Panc1 (cell line): ENCODE measurements at regions of chr15 and their contacts with region 1.

Region 1: GRCh38 chr15:96893159-96893906 is 562.8 kb downstream of the NR2F2 start:
- DNase-seq: no peak
- ATAC-seq: peak; percentile 88
- H3K4me3 ChIP-seq: no peak overlapping the region
- H3K27ac ChIP-seq: no peak overlapping the region
- H3K4me1 ChIP-seq: no peaks in the 10 kb centered on the region
- H3K27me3 ChIP-seq: no peaks in the 10 kb centered on the region
- CTCF ChIP-seq: peak; percentile 82

Region 2: GRCh38 chr15:96672629-96673028 is 220.7 kb before region 1 on chr15:
- CTCF ChIA-PET with region 1: interaction called, 10 read pairs
- POLR2A ChIA-PET with region 1: no interaction called
- in situ Hi-C with region 1: no loop called
- intact Hi-C with region 1: no loop called
- DNase-seq: no peak
- ATAC-seq: no peak
- H3K4me3 ChIP-seq: no peak overlapping the region
- H3K27ac ChIP-seq: no peak overlapping the region
- H3K4me1 ChIP-seq: no peaks in the 10 kb centered on the region
- H3K27me3 ChIP-seq: no peaks in the 10 kb centered on the region
- CTCF ChIP-seq: no peak

Region 3: DNA sequence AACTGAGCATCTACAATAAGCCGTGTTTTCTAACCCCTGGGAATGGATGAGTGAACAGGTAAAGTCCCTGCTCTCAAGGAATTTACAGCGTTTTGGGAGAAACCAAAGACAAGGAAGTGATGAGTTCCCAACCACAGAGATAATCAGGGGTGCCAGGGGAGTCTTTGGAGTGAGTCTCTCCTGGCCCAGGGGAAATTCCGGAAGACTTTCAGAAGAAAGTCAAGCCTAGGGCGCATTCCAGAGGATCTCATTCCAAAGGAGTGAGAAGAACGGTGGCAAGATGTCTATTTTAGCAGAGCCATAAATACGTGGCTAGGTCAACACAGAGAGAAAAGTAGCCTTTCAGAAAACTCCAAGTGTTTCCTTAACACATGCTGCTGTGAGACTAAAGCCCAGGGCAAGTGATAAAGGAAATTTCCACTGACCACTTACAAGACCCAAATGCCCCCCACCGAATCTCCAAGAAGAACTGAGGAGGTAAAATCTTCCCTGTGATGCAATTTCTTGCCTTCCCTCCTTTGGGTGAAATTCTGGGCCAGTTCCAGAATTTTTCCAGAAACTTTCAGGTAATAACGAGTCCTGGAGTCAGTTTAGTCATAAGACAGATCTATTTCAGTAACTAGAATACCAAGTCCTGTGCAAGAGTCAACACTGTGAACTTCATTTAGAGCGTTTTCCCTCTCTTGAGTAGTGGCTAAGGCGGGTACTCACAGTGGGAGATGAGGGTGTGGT is 125.5 kb before region 1 on chr15:
- CTCF ChIA-PET with region 1: no interaction called
- POLR2A ChIA-PET with region 1: no interaction called
- in situ Hi-C with region 1: no loop called
- intact Hi-C with region 1: no loop called
- DNase-seq: no peak
- ATAC-seq: peak; percentile 48; the same call in 1 of the 2 replicates
- H3K4me3 ChIP-seq: no peak overlapping the region
- H3K27ac ChIP-seq: no peak overlapping the region
- H3K4me1 ChIP-seq: no peaks in the 10 kb centered on the region
- H3K27me3 ChIP-seq: no peaks in the 10 kb centered on the region
- CTCF ChIP-seq: no peak

Region 4: DNA sequence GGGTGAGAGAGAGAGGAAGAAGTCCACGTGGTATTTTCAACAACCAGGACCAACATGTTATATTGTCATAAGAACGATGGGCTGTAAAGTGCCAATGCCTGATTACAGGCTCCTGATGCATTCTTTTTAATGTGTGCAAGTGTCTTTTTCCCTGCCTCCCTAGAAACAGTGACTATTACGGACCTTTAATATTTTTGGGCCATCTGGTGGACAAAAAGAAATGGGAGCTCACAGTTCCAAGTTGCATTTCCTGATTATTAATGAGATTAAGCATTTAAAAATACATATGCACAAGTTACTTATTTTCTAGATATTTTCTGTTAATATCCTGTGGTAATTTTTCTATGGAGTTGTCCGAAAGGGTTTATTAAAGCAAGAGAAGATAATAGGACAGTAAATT is 32.6 kb before region 1 on chr15:
- CTCF ChIA-PET with region 1: no interaction called
- POLR2A ChIA-PET with region 1: no interaction called
- in situ Hi-C with region 1: no loop called
- intact Hi-C with region 1: no loop called
- DNase-seq: no peak
- ATAC-seq: no peak
- H3K4me3 ChIP-seq: no peak overlapping the region
- H3K27ac ChIP-seq: no peak overlapping the region
- H3K4me1 ChIP-seq: no peaks in the 10 kb centered on the region
- H3K27me3 ChIP-seq: no peaks in the 10 kb centered on the region
- CTCF ChIP-seq: no peak; the same call in 1 of the 2 replicates

Region 5: GRCh38 chr15:97234851-97235610 is 341.7 kb after region 1 on chr15:
- CTCF ChIA-PET with region 1: no interaction called
- POLR2A ChIA-PET with region 1: no interaction called
- in situ Hi-C with region 1: no loop called
- intact Hi-C with region 1: loop called (anchors 5 kb)
- DNase-seq: peak; percentile 38
- ATAC-seq: peak; percentile 92
- H3K4me3 ChIP-seq: peak overlapping the region in 1 of 2 experiments; percentile 18; a peak in 1 of 4 replicates
- H3K27ac ChIP-seq: no peak overlapping the region
- H3K4me1 ChIP-seq: peaks cover 6% of the 10 kb centered on the region; the same call in 1 of the 2 replicates
- H3K27me3 ChIP-seq: no peaks in the 10 kb centered on the region
- CTCF ChIP-seq: peak; percentile 92

Region 6: GRCh38 chr15:98484908-98485307 is 1591.6 kb after region 1 on chr15:
- CTCF ChIA-PET with region 1: no interaction called
- POLR2A ChIA-PET with region 1: interaction called, 10 read pairs
- in situ Hi-C with region 1: no loop called
- intact Hi-C with region 1: no loop called
- DNase-seq: no peak
- ATAC-seq: no peak
- H3K4me3 ChIP-seq: no peak overlapping the region
- H3K27ac ChIP-seq: no peak overlapping the region
- H3K4me1 ChIP-seq: no peaks in the 10 kb centered on the region
- H3K27me3 ChIP-seq: no peaks in the 10 kb centered on the region; the same call in 1 of the 2 replicates
- CTCF ChIP-seq: no peak